ENCODE measurements at regions of chr5 and their contacts with region 1.

Region 1: GRCh38 chr5:98928873-98929696 is at the start of gene CHD1:
- DNase-seq: peak; percentile 96
- H3K4me3 ChIP-seq: peak within 1 kb of the TSS; percentile 83
- H3K4me3 Mint-ChIP-seq: peak within 1 kb of the TSS; percentile 79
- H3K27ac Mint-ChIP-seq: peak within 1 kb of the TSS; percentile 98
- H3K4me1 ChIP-seq: 0 out of 2 replicates have a peak, but pooled peaks cover 2% of the 10 kb centered on the region
- H3K4me1 Mint-ChIP-seq: no peaks in the 10 kb centered on the region
- H3K27me3 ChIP-seq: no peaks in the 10 kb centered on the region
- H3K27me3 Mint-ChIP-seq: no peaks in the 10 kb centered on the region
- CTCF ChIP-seq: no peak
- total RNA-seq, gene CHD1: 51.1 and 52.5 TPM in 2 replicates

Region 2: GRCh38 chr5:97183100-97183929 is 1745.8 kb before region 1 on chr5 and contains the start of gene RIOK2:
- CTCF ChIA-PET with region 1: no interaction called
- POLR2A ChIA-PET with region 1: no interaction called
- intact Hi-C with region 1: loop called (anchors 1 kb)
- DNase-seq: peak; percentile 96 to 98
- H3K4me3 ChIP-seq: peak within 1 kb of the TSS; percentile 87
- H3K4me3 Mint-ChIP-seq: peak within 1 kb of the TSS; percentile 74
- H3K27ac Mint-ChIP-seq: peak within 1 kb of the TSS; percentile 98
- H3K4me1 ChIP-seq: 0 out of 2 replicates have a peak, but pooled peaks cover 13% of the 10 kb centered on the region
- H3K4me1 Mint-ChIP-seq: peaks cover 25% of the 10 kb centered on the region
- H3K27me3 ChIP-seq: no peaks in the 10 kb centered on the region
- H3K27me3 Mint-ChIP-seq: no peaks in the 10 kb centered on the region
- CTCF ChIP-seq: no peak
- total RNA-seq, gene RIOK2: 36.3 and 38.7 TPM in 2 replicates

Region 3: GRCh38 chr5:98839469-98840383 is 89.4 kb before region 1 on chr5:
- CTCF ChIA-PET with region 1: no interaction called
- POLR2A ChIA-PET with region 1: no interaction called
- intact Hi-C with region 1: no loop called
- DNase-seq: peak in 1 of 2 experiments; percentile 13
- H3K4me3 ChIP-seq: peak overlapping the region; percentile 15
- H3K4me3 Mint-ChIP-seq: peak overlapping the region; percentile 65
- H3K27ac Mint-ChIP-seq: no peak overlapping the region
- H3K4me1 ChIP-seq: no peaks in the 10 kb centered on the region
- H3K4me1 Mint-ChIP-seq: no peaks in the 10 kb centered on the region
- H3K27me3 ChIP-seq: no peaks in the 10 kb centered on the region
- H3K27me3 Mint-ChIP-seq: no peaks in the 10 kb centered on the region
- CTCF ChIP-seq: peak; percentile 20 to 40

Region 4: DNA sequence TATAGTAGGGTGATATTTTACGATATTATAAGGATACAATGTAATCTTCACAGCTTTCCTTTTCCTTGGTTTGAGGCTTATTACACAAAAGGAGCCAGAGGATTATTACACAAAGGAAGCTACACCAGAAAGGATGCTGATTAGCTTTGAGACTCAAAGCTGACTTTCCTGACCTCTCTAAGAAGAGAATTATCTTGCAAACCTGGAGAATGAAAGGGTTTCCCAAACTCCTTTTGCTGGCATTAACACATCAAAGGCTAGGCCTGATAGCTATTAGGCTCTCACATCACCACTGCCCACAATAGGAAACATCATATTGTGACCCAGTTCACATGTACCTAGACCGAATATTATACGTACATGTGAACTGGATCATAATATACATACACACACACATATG is 33.9 kb after region 1 on chr5:
- CTCF ChIA-PET with region 1: no interaction called
- POLR2A ChIA-PET with region 1: no interaction called
- intact Hi-C with region 1: loop called (anchors 1 kb)
- DNase-seq: peak in 1 of 2 experiments; percentile 4
- H3K4me3 ChIP-seq: no peak overlapping the region
- H3K4me3 Mint-ChIP-seq: no peak overlapping the region
- H3K27ac Mint-ChIP-seq: peak overlapping the region; percentile 42
- H3K4me1 ChIP-seq: peaks cover 21% of the 10 kb centered on the region
- H3K4me1 Mint-ChIP-seq: peaks cover 20% of the 10 kb centered on the region
- H3K27me3 ChIP-seq: no peaks in the 10 kb centered on the region
- H3K27me3 Mint-ChIP-seq: no peaks in the 10 kb centered on the region
- CTCF ChIP-seq: no peak

Region 5: GRCh38 chr5:99025298-99026045 is 96.4 kb after region 1 on chr5:
- CTCF ChIA-PET with region 1: no interaction called
- POLR2A ChIA-PET with region 1: interaction called, 11 read pairs
- intact Hi-C with region 1: loop called (anchors 2 kb)
- DNase-seq: peak in 1 of 2 experiments; percentile 46
- H3K4me3 ChIP-seq: no peak overlapping the region
- H3K4me3 Mint-ChIP-seq: no peak overlapping the region
- H3K27ac Mint-ChIP-seq: no peak overlapping the region
- H3K4me1 ChIP-seq: peaks cover 53% of the 10 kb centered on the region
- H3K4me1 Mint-ChIP-seq: peaks cover 2% of the 10 kb centered on the region
- H3K27me3 ChIP-seq: no peaks in the 10 kb centered on the region
- H3K27me3 Mint-ChIP-seq: no peaks in the 10 kb centered on the region
- CTCF ChIP-seq: no peak